ENCODE measurements at regions of chr12 and their contacts with region 1.

Region 1: GRCh38 chr12:132153501-132154340 is 9.5 kb downstream of the NOC4L start:
- DNase-seq: peak; percentile 79
- ATAC-seq: peak; percentile 89

Region 2: DNA sequence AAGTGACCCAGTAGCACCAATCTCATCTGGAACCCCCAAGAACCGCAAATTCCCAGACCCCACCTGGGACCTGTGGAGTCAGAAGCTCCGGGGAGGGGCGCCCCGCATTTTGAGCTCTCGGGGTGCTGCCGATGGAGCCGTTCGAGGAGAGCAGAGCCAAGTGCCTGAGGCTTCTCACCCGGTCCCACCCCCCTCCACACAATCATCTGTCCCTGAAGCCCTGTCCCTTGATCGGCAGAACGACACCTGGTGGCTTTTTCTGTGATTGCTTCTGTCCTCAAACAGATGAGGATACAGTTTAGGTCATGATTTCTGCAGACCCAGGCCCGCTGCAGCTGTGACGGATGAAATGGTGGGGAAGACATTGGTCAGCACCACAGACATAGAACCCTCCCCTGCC is 65.2 kb after region 1 on chr12:
- intact Hi-C with region 1: loop called (anchors 2 kb)
- DNase-seq: peak; percentile 55
- ATAC-seq: no peak

Region 3: GRCh38 chr12:132614861-132615578 is 461.3 kb after region 1 on chr12:
- intact Hi-C with region 1: loop called (anchors 10 kb)
- DNase-seq: peak; percentile 81
- ATAC-seq: peak; percentile 84